ENCODE measurements at regions of chr5 and their contacts with region 1.

Region 1: GRCh38 chr5:90898330-90899013 is 339.9 kb downstream of the ADGRV1 start:
- DNase-seq: no peak
- H3K4me3 ChIP-seq: no peak overlapping the region
- H3K4me3 Mint-ChIP-seq: no peak overlapping the region
- H3K27ac Mint-ChIP-seq: no peak overlapping the region
- H3K4me1 ChIP-seq: peaks cover 25% of the 10 kb centered on the region
- H3K4me1 Mint-ChIP-seq: peaks cover 9% of the 10 kb centered on the region
- H3K27me3 ChIP-seq: no peaks in the 10 kb centered on the region
- H3K27me3 Mint-ChIP-seq: no peaks in the 10 kb centered on the region
- CTCF ChIP-seq: no peak

Region 2: GRCh38 chr5:90612919-90613318 is 285.6 kb before region 1 on chr5:
- CTCF ChIA-PET with region 1: no interaction called
- POLR2A ChIA-PET with region 1: no interaction called
- intact Hi-C with region 1: no loop called
- DNase-seq: no peak
- H3K4me3 ChIP-seq: no peak overlapping the region
- H3K4me3 Mint-ChIP-seq: no peak overlapping the region
- H3K27ac Mint-ChIP-seq: no peak overlapping the region
- H3K4me1 ChIP-seq: no peaks in the 10 kb centered on the region
- H3K4me1 Mint-ChIP-seq: no peaks in the 10 kb centered on the region
- H3K27me3 ChIP-seq: no peaks in the 10 kb centered on the region; the same call in 1 of the 2 replicates
- H3K27me3 Mint-ChIP-seq: peaks cover 13% of the 10 kb centered on the region
- CTCF ChIP-seq: no peak

Region 3: DNA sequence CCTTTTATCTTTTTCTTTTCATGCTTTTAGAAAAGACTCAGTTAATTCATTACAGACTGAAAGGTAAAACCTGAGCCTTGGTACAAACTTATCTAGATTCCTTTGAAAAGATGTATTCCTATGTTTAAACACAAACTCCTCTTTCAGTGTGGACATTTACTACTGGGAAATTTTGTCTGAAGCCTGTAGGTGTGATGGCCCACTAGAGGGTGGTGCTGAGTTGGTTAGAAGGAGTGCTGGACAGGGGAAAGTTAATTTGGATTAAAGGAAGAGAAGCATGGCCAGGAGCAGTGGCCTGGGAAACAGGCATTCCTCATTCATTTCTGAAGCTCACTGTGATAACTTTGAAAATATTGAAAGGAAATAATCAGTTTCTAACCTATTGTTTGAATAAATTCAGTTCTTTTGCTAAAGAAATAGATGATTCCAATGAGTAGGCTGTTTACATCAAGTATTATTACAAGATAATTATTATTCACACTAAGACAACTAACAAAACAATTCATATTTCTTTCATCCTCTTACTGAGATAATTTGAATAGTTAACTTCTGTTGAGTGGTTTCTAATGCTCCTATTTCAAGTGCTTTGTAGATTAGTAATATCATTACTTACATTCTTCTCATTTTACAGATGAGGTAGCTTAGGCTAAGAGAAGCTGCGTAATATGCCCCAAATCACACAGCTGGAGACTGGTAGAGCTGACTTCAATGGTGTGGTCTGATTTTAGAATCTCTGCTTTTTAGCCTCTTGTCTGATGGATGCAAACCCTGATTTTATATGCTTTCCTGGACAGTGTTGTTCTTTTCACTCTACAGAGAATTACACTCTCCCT is 188.9 kb before region 1 on chr5:
- CTCF ChIA-PET with region 1: no interaction called
- POLR2A ChIA-PET with region 1: no interaction called
- intact Hi-C with region 1: no loop called
- DNase-seq: peak; percentile 54 to 63
- H3K4me3 ChIP-seq: no peak overlapping the region
- H3K4me3 Mint-ChIP-seq: no peak overlapping the region
- H3K27ac Mint-ChIP-seq: no peak overlapping the region
- H3K4me1 ChIP-seq: no peaks in the 10 kb centered on the region
- H3K4me1 Mint-ChIP-seq: no peaks in the 10 kb centered on the region
- H3K27me3 ChIP-seq: no peaks in the 10 kb centered on the region
- H3K27me3 Mint-ChIP-seq: no peaks in the 10 kb centered on the region
- CTCF ChIP-seq: peak; percentile 68 to 91

Region 4: GRCh38 chr5:90866333-90866732 is 32.1 kb before region 1 on chr5:
- CTCF ChIA-PET with region 1: no interaction called
- POLR2A ChIA-PET with region 1: no interaction called
- intact Hi-C with region 1: loop called (anchors 1 kb)
- DNase-seq: no peak
- H3K4me3 ChIP-seq: no peak overlapping the region
- H3K4me3 Mint-ChIP-seq: no peak overlapping the region
- H3K27ac Mint-ChIP-seq: no peak overlapping the region
- H3K4me1 ChIP-seq: peaks cover 25% of the 10 kb centered on the region
- H3K4me1 Mint-ChIP-seq: peaks cover 14% of the 10 kb centered on the region
- H3K27me3 ChIP-seq: no peaks in the 10 kb centered on the region
- H3K27me3 Mint-ChIP-seq: no peaks in the 10 kb centered on the region
- CTCF ChIP-seq: peak; percentile 34 to 42

Region 5: GRCh38 chr5:90876366-90876765 is 22.1 kb before region 1 on chr5:
- CTCF ChIA-PET with region 1: no interaction called
- POLR2A ChIA-PET with region 1: no interaction called
- intact Hi-C with region 1: loop called (anchors 2 kb)
- DNase-seq: no peak
- H3K4me3 ChIP-seq: no peak overlapping the region
- H3K4me3 Mint-ChIP-seq: no peak overlapping the region
- H3K27ac Mint-ChIP-seq: no peak overlapping the region
- H3K4me1 ChIP-seq: peaks cover 12% of the 10 kb centered on the region
- H3K4me1 Mint-ChIP-seq: peaks cover 13% of the 10 kb centered on the region
- H3K27me3 ChIP-seq: no peaks in the 10 kb centered on the region
- H3K27me3 Mint-ChIP-seq: no peaks in the 10 kb centered on the region
- CTCF ChIP-seq: no peak